A673 (cell line): ENCODE measurements at regions of chr4 and their contacts with region 1.

Region 1: DNA sequence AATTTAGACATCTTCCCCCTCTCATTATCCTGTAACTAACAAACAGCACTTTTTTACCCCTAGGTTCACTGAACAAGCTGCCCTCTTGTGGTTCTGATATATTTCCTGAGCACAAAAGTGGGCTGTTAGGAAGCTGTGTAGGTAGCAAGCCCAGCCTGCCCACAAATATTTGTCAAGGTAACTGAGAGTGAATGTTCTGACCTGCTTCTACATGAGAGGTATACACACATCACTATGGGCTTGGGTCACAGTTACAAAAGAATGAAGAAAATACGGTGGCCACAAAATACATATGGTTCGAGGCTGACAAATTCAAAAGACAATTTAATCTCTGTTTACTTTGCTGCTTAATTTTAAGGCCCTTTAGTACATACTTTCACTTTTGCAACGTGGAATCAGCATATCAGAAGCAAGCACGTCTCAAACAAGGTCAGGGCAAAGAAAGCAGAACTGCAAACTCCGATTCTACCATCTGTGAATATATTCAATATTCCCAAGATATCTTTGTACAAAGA is 78.7 kb downstream of the RBM47 start:
- DNase-seq: peak; percentile 28
- H3K4me3 ChIP-seq: no peak overlapping the region
- H3K27ac ChIP-seq: no peak overlapping the region
- H3K4me1 ChIP-seq: no peaks in the 10 kb centered on the region
- H3K27me3 ChIP-seq: no peaks in the 10 kb centered on the region
- CTCF ChIP-seq: peak; percentile 46; the same call in 1 of the 2 replicates

Region 2: GRCh38 chr4:40301603-40302002 is 249.4 kb before region 1 on chr4:
- CTCF ChIA-PET with region 1: no interaction called
- POLR2A ChIA-PET with region 1: no interaction called
- intact Hi-C with region 1: no loop called
- DNase-seq: no peak
- H3K4me3 ChIP-seq: no peak overlapping the region
- H3K27ac ChIP-seq: no peak overlapping the region
- H3K4me1 ChIP-seq: no peaks in the 10 kb centered on the region
- H3K27me3 ChIP-seq: no peaks in the 10 kb centered on the region
- CTCF ChIP-seq: no peak

Region 3: GRCh38 chr4:40525811-40526598 is 25.0 kb before region 1 on chr4:
- CTCF ChIA-PET with region 1: interaction called, 13 read pairs
- POLR2A ChIA-PET with region 1: no interaction called
- intact Hi-C with region 1: no loop called
- DNase-seq: peak; percentile 15
- H3K4me3 ChIP-seq: no peak overlapping the region
- H3K27ac ChIP-seq: no peak overlapping the region
- H3K4me1 ChIP-seq: no peaks in the 10 kb centered on the region
- H3K27me3 ChIP-seq: no peaks in the 10 kb centered on the region
- CTCF ChIP-seq: no peak